ENCODE measurements at regions of chr9 and their contacts with region 1.

Region 1: GRCh38 chr9:128771745-128772519 is at the start of gene ZER1:
- DNase-seq: peak; percentile 85
- H3K4me3 Mint-ChIP-seq: peak within 1 kb of the TSS; percentile 96
- H3K27ac Mint-ChIP-seq: peak within 1 kb of the TSS; percentile 92
- H3K4me1 Mint-ChIP-seq: peaks cover 11% of the 10 kb centered on the region
- H3K27me3 Mint-ChIP-seq: no peaks in the 10 kb centered on the region
- CTCF ChIP-seq: no peak
- total RNA-seq, gene ZER1: 19.5 and 26.6 TPM in 2 replicates

Region 2: DNA sequence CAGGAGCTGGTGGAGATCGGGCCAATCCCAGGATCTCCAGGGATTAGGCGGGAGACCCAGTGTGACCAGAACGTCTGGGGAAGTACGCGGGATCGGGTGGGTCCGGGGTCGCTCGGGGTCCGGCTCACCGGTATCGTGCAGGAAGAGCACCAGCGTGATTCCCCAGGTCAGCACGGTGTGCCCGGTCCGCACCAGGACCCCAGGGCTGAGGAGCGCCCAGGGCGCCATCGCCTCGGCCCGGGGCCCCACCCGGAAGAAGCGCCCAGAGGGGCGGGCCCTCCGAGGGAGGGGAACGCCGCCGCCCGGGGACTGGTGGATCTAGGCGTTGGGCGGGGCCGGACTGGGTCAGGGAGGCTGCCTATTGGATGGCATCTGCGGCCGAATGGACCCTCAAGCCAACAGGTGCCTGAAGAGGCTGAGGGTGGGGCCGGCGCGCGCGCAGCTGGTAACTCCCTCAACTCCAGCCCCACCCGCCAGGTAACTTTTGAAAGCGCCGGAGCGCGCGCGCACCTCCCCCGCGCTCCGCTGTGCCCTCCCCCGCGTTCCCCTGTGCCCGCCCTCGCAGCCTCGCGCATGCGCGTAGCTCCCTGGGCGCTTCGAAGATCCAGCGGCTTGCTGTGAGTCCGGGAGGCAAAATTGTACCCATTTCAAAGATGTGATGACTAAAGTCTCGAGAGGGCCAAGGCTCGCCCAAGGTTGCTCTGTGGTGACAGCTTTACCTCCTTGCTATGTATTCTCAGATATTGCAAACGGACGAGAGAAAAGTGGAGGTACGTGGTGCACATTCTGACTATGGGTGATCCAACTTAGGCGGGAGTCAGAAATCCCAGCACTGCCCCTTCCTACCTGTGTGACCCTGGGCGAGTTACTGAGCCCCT is 47.8 kb before region 1 on chr9 and contains the start of gene ZDHHC12:
- CTCF ChIA-PET with region 1: interaction called, 4 read pairs
- POLR2A ChIA-PET with region 1: interaction called, 15 read pairs
- intact Hi-C with region 1: no loop called
- DNase-seq: peak; percentile 99
- H3K4me3 Mint-ChIP-seq: peak within 1 kb of the TSS; percentile 80
- H3K27ac Mint-ChIP-seq: peak within 1 kb of the TSS; percentile 79
- H3K4me1 Mint-ChIP-seq: peaks cover 36% of the 10 kb centered on the region
- H3K27me3 Mint-ChIP-seq: no peaks in the 10 kb centered on the region
- CTCF ChIP-seq: no peak
- total RNA-seq, gene ZDHHC12: 22.1 and 22.9 TPM in 2 replicates

Region 3: GRCh38 chr9:128786681-128787601 is 15.0 kb after region 1 on chr9 and contains the start of gene TBC1D13:
- CTCF ChIA-PET with region 1: interaction called, 3 read pairs
- POLR2A ChIA-PET with region 1: interaction called, 30 read pairs
- intact Hi-C with region 1: loop called (anchors 1 kb)
- DNase-seq: peak; percentile 80
- H3K4me3 Mint-ChIP-seq: peak within 1 kb of the TSS; percentile 90
- H3K27ac Mint-ChIP-seq: peak within 1 kb of the TSS; percentile 85
- H3K4me1 Mint-ChIP-seq: no peaks in the 10 kb centered on the region
- H3K27me3 Mint-ChIP-seq: no peaks in the 10 kb centered on the region
- CTCF ChIP-seq: no peak
- total RNA-seq, gene TBC1D13: 10.9 and 13.8 TPM in 2 replicates

Region 4: GRCh38 chr9:128800061-128800460 is 28.1 kb after region 1 on chr9:
- CTCF ChIA-PET with region 1: no interaction called
- POLR2A ChIA-PET with region 1: no interaction called
- intact Hi-C with region 1: no loop called
- DNase-seq: no peak
- H3K4me3 Mint-ChIP-seq: no peak overlapping the region
- H3K27ac Mint-ChIP-seq: no peak overlapping the region
- H3K4me1 Mint-ChIP-seq: no peaks in the 10 kb centered on the region
- H3K27me3 Mint-ChIP-seq: no peaks in the 10 kb centered on the region
- CTCF ChIP-seq: no peak